ENCODE measurements at regions of chr12 and their contacts with region 1.

Region 1: DNA sequence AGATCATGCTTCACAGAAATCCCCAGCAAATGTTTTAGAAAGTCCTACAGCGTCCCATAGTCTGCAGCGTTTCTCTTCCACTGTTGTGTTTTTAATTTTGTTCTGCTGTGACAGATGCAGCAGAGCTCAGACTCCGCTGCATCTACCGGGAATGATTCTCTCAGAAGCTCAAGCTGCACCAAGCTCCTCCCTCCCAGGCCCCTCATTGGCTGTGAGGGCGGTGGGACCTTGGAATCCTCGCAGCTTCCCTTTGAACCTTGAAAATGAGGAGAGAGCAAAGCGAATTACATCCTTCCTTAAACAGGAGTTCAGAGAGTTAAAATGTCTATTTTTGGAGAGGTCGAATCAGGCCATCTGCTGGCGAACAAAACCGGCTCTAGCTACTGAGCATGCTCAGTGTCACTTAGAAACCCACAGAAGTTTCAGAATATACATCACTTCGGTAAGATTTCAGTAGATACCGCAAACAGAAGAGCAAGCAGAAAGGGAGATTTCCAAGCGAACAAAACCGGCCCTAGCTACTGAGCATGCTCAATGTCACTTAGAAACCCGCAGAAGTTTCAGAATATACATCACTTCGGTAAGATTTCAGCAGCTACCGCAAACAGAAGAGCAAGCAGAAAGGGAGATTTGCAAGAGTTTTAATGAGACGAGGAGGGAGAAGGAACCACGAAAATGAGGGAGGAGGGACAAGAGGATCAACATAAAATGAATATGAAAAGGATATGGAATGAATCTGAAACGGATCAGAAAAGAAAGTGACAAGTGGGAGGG is at the start of gene ABCD2:
- DNase-seq: peak; percentile 85
- H3K4me3 Mint-ChIP-seq: no peak within 1 kb of the TSS
- H3K27ac Mint-ChIP-seq: no peak within 1 kb of the TSS
- H3K4me1 Mint-ChIP-seq: peaks cover 32% of the 10 kb centered on the region
- H3K27me3 Mint-ChIP-seq: no peaks in the 10 kb centered on the region
- total RNA-seq, gene ABCD2: 4.8 to 5.0 TPM

Region 2: DNA sequence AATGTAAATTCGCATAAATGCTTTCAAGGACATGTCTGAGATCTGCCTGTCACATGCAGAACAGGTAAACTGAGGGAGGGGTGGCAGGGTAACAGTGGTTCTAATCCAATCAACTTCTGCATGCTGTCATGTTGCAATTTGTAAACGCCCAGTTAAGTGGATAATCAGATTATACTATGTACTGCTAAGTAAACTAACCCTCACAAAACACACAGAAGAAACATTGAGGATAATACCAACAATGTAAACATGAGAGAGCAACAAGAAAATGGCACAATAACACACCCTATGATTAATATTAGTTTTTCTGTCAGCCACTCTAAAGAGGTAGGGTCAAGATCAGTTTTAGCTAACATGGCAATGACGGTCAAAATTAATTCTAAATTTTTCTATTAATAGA is 300.7 kb before region 1 on chr12:
- CTCF ChIA-PET with region 1: interaction called, 3 read pairs
- POLR2A ChIA-PET with region 1: no interaction called
- intact Hi-C with region 1: loop called (anchors 2 kb)
- DNase-seq: no peak
- H3K4me3 Mint-ChIP-seq: no peak overlapping the region
- H3K27ac Mint-ChIP-seq: no peak overlapping the region
- H3K4me1 Mint-ChIP-seq: no peaks in the 10 kb centered on the region
- H3K27me3 Mint-ChIP-seq: no peaks in the 10 kb centered on the region

Region 3: DNA sequence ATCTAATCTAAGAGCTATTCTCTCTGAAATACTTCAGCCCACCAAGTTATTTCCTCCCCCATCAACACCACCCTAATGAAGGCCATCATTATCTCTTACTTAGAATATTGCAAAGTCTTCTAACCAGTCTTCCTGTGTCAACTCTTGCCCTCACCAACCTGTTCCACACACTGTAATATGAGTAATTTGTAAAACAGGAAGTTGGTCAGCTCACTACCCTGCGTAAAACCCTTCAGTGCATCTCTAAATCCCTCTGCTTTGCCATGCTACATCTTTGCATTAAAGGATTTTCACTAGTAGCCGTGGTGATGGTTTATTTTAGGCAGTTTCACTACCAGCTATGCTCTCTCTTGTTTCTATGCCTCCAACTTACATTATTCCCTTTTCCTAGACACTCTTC is 246.9 kb before region 1 on chr12:
- CTCF ChIA-PET with region 1: no interaction called
- POLR2A ChIA-PET with region 1: no interaction called
- intact Hi-C with region 1: loop called (anchors 2 kb)
- DNase-seq: peak; percentile 16
- H3K4me3 Mint-ChIP-seq: no peak overlapping the region
- H3K27ac Mint-ChIP-seq: peak overlapping the region; percentile 52
- H3K4me1 Mint-ChIP-seq: peaks cover 16% of the 10 kb centered on the region
- H3K27me3 Mint-ChIP-seq: no peaks in the 10 kb centered on the region

Region 4: GRCh38 chr12:39413836-39414771 is 205.7 kb before region 1 on chr12:
- CTCF ChIA-PET with region 1: no interaction called
- POLR2A ChIA-PET with region 1: no interaction called
- intact Hi-C with region 1: no loop called
- DNase-seq: no peak
- H3K4me3 Mint-ChIP-seq: no peak overlapping the region
- H3K27ac Mint-ChIP-seq: no peak overlapping the region
- H3K4me1 Mint-ChIP-seq: peaks cover 9% of the 10 kb centered on the region
- H3K27me3 Mint-ChIP-seq: no peaks in the 10 kb centered on the region

Region 5: DNA sequence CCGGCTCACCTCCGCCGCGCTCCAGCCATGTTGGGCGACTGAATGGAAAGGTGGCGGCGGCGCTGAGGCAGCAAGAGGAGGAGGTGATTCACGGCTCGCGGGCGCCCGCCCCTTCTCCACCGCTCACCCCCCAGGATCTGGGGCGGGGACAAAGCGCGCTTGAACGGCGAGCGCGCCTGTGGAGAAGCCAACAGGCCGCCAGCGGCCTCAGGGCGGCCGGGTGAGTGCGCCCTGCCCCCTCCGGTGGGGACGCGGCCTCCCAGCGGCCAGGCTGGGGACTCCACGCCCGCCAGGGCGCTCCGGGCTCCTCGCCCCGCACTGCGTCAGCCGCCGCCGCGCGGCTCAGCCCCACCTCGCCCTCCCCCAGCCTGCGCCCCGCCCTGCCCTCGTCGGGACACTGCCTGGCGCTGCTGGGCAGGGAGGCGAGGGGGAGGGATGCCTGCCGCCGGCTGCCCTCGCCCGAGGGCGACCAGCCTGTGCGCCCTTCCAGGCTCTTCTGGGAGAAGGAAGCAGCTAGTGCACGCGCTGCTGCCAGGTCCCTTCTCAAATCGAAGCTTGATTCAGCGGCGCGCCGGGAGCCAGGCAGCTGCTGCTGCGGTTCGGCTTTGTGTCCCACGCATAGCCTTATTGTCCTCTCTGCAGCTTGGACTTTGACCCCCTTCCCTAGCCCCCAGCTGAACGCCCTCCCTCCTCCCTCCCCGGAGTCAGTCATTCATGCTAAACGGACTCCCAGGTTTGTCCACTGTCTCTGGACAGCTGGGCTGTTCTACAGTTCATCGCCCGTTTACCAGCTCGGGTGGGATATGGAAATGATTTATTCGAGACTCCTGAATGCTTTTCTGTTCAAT is 176.5 kb before region 1 on chr12 and contains the start of gene KIF21A:
- CTCF ChIA-PET with region 1: interaction called, 4 read pairs
- POLR2A ChIA-PET with region 1: interaction called, 15 read pairs
- intact Hi-C with region 1: loop called (anchors 1 kb)
- DNase-seq: peak; percentile 93
- H3K4me3 Mint-ChIP-seq: peak within 1 kb of the TSS; percentile 98
- H3K27ac Mint-ChIP-seq: peak within 1 kb of the TSS; percentile 88
- H3K4me1 Mint-ChIP-seq: peaks cover 24% of the 10 kb centered on the region
- H3K27me3 Mint-ChIP-seq: no peaks in the 10 kb centered on the region
- total RNA-seq, gene KIF21A: 28.5 to 30.5 TPM

Region 6: DNA sequence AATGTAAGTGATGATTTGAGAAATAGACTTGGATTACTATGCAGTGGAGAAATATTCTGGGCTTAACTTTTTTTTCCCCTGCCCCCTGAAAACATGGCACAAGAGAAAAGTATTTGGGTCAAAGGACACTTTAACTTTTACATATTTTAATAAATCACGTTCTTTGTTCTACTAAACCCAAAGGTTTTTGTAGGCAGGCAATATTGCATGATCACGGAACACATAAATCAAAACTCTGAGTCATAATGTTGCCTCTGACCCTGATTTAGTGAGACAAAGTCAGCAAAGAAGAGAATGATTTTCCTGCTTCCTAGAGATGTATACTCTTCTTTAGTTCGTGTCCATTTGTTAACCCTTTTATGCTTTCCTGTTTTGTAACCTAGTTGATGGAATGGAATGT is 38.3 kb before region 1 on chr12:
- CTCF ChIA-PET with region 1: interaction called, 4 read pairs
- POLR2A ChIA-PET with region 1: no interaction called
- intact Hi-C with region 1: loop called (anchors 5 kb)
- DNase-seq: no peak
- H3K4me3 Mint-ChIP-seq: no peak overlapping the region
- H3K27ac Mint-ChIP-seq: no peak overlapping the region
- H3K4me1 Mint-ChIP-seq: peaks cover 2% of the 10 kb centered on the region
- H3K27me3 Mint-ChIP-seq: no peaks in the 10 kb centered on the region

Region 7: DNA sequence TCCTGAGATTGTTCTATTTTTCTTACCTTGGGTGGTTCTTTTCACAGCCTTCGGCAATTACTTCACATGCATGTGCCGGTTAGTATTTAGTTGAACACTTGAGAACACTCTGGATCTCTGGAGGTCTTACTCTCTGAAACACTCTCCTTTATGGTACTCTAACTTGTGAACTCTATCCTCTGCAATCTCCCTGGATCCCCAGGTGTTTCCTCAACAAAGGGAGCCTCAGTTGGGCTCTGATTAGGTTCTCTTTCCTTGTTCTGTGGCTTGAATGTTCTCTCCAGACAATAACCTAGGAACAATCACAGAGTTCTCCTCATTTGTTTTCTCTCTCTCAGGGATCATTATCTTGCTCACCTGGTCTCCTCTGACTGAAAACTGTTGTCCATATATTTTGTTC is 40.3 kb after region 1 on chr12:
- CTCF ChIA-PET with region 1: no interaction called
- POLR2A ChIA-PET with region 1: no interaction called
- intact Hi-C with region 1: no loop called
- DNase-seq: no peak
- H3K4me3 Mint-ChIP-seq: no peak overlapping the region
- H3K27ac Mint-ChIP-seq: no peak overlapping the region
- H3K4me1 Mint-ChIP-seq: no peaks in the 10 kb centered on the region
- H3K27me3 Mint-ChIP-seq: no peaks in the 10 kb centered on the region

Region 8: GRCh38 chr12:39682689-39683477 is 63.0 kb after region 1 on chr12:
- CTCF ChIA-PET with region 1: interaction called, 3 read pairs
- POLR2A ChIA-PET with region 1: interaction called, 7 read pairs
- intact Hi-C with region 1: loop called (anchors 1 kb)
- DNase-seq: no peak
- H3K4me3 Mint-ChIP-seq: peak overlapping the region; percentile 76
- H3K27ac Mint-ChIP-seq: peak overlapping the region; percentile 82
- H3K4me1 Mint-ChIP-seq: peaks cover 33% of the 10 kb centered on the region
- H3K27me3 Mint-ChIP-seq: no peaks in the 10 kb centered on the region

Region 9: DNA sequence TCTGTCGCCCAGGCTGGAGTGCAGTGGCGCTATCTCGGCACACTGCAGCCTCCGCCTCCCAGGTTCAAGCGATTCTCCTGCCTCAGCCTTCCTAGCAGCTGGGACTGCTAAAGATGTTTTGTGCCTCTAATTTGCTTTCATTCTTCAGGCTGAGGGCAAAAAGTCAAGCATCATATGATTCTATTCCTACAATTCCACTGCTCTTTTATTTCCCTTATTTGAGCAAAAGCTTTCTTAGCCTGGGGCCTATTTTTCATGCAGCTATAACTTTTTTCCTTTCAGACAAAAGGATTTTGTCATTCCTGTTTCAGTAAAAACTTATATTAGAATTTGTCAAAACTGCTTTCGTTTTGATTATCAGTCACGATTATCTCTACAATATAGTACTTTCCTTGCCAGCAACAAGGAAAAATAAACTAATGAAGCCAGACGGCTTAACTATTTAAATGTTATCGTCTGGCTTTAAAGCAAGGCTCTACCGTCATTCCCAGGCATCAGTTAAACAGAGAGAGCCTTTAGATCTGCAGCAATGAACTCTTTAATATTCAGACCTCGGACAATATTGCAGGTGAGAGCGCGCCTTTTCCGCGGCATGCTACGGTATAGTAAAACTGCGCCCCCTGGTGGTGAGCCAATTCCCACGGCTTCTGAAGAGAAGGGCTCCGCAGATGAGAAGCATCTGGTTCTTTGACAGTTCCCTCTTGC is 487.4 kb after region 1 on chr12:
- CTCF ChIA-PET with region 1: interaction called, 4 read pairs
- POLR2A ChIA-PET with region 1: no interaction called
- intact Hi-C with region 1: loop called (anchors 1 kb)
- DNase-seq: peak; percentile 91
- H3K4me3 Mint-ChIP-seq: peak overlapping the region; percentile 65
- H3K27ac Mint-ChIP-seq: peak overlapping the region; percentile 13
- H3K4me1 Mint-ChIP-seq: peaks cover 53% of the 10 kb centered on the region
- H3K27me3 Mint-ChIP-seq: peaks cover 10% of the 10 kb centered on the region

Region 10: GRCh38 chr12:40208707-40209446 is 589.0 kb after region 1 on chr12:
- CTCF ChIA-PET with region 1: no interaction called
- POLR2A ChIA-PET with region 1: no interaction called
- intact Hi-C with region 1: no loop called
- DNase-seq: no peak
- H3K4me3 Mint-ChIP-seq: no peak overlapping the region
- H3K27ac Mint-ChIP-seq: no peak overlapping the region
- H3K4me1 Mint-ChIP-seq: no peaks in the 10 kb centered on the region
- H3K27me3 Mint-ChIP-seq: peaks cover 5% of the 10 kb centered on the region